ENCODE measurements at regions of chr9 and their contacts with region 1.

Region 1: DNA sequence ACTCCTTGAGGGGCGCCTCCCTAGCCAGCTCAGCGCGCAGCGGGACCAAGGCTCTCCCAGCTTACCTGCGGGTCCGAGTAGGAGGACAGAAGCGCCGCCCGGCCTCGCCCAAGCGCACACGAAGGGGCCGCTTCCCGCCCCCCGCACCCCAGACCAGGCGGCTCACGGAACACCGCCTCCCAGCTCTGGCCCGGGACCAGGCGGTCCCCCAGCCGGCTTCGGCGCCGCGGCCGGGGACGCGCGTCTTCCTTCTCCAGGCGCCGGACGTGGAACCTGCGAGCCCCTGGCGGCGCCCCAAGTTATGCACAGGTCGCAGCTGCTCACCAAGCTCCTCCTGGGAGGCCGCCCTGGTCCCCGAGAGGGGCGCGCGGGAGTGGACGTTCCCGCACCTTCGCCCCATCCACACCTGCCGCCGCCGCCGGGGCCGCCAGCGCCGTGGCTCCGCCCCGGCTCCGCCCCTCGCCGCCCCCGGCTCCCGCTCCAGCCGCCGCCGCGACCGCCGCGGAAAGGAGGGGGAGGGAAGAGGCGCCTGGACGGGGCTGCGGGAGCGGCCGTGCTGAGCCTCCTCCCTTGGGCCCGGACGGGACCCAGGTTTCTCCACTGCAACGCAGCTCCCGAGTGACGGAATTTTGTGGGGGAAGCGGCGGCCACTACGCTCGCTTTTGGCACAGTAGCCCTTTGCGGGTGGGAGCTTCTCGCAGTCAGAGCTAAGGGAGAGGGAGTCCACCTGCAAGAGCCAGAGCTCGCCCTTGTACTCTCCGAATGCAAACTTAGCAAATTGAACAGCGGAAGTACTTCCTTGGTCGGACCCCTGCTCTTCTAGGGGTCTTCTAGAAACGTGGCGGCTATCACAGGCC is 77.5 kb upstream of the IFNE start:
- DNase-seq: peak; percentile 54
- H3K27ac ChIP-seq: peak overlapping the region; percentile 97
- CTCF ChIP-seq: 0 out of 2 replicates have a peak, but pooled peaks have one; percentile 16

Region 2: DNA sequence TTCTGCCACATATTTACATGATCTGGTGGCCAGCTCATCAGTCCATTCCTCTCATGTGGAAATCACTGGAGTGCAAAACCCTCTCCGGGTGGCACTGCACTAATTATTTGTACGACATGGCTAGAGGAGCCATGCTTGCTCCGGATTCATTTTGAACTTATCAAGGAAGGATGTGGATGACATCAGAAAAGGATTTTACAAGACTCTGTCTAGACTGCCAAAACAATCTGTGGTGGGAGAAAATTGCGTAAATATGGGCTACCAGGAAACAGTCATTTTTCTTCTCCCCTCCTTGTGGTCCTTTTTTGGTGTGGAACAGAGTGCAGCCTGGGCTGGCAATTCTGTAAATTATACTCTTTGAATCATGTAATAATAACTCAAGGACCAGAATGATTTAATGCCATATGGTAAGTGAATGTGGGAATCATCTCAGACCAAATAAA is 45.9 kb after region 1 on chr9:
- CTCF ChIA-PET with region 1: no interaction called
- POLR2A ChIA-PET with region 1: no interaction called
- DNase-seq: no peak
- H3K27ac ChIP-seq: no peak overlapping the region
- CTCF ChIP-seq: no peak

Region 3: DNA sequence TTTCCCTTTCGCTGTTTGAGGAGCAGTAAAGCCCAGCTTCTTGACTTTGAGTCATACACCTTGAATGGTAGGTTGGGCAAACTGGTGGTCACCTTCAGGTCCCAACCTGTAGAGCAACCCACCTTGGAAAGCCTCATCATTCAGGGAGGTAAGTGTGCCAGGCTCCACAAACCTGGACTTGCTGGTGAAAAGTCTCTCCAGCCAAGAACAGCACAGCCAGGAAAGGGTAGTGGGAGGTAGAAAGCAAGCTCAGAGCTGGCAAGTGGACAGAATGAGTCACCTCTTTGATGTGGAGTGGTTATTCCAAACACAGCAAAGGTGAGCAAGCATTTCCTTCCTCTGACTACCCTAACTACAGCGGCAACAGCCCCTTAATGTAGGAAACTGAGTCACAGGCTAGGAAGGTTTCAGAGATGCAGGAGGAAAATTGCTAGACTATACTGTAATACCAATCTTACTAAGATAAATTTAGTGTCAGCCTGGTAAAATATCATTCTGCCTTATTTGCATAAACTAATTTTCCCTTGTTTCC is 125.2 kb after region 1 on chr9:
- CTCF ChIA-PET with region 1: interaction called, 3 read pairs
- POLR2A ChIA-PET with region 1: interaction called, 15 read pairs
- DNase-seq: peak; percentile 82
- H3K27ac ChIP-seq: peak overlapping the region; percentile 81
- CTCF ChIP-seq: no peak

Measured in RWPE1 (cell line).